ENCODE measurements at regions of chr2 and their contacts with region 1.

Region 1: GRCh38 chr2:231706731-231707624 is 1.3 kb upstream of the PTMA start:
- DNase-seq: peak; percentile 95
- ATAC-seq: peak; percentile 35
- H3K4me3 ChIP-seq: peak overlapping the region; percentile 58 to 83 (median 75)
- H3K27ac ChIP-seq: peak overlapping the region; percentile 87
- H3K4me1 ChIP-seq: peaks cover 55% of the 10 kb centered on the region
- H3K27me3 ChIP-seq: no peaks in the 10 kb centered on the region
- CTCF ChIP-seq: peak; percentile 98
- EP300 ChIP-seq: peak in 1 of 2 experiments; percentile 16; a peak in 1 of 4 replicates
- POLR2A ChIP-seq: peak in 1 of 2 experiments; percentile 79; a peak in 2 of 4 replicates
- RAD21 ChIP-seq: no peak

Region 2: DNA sequence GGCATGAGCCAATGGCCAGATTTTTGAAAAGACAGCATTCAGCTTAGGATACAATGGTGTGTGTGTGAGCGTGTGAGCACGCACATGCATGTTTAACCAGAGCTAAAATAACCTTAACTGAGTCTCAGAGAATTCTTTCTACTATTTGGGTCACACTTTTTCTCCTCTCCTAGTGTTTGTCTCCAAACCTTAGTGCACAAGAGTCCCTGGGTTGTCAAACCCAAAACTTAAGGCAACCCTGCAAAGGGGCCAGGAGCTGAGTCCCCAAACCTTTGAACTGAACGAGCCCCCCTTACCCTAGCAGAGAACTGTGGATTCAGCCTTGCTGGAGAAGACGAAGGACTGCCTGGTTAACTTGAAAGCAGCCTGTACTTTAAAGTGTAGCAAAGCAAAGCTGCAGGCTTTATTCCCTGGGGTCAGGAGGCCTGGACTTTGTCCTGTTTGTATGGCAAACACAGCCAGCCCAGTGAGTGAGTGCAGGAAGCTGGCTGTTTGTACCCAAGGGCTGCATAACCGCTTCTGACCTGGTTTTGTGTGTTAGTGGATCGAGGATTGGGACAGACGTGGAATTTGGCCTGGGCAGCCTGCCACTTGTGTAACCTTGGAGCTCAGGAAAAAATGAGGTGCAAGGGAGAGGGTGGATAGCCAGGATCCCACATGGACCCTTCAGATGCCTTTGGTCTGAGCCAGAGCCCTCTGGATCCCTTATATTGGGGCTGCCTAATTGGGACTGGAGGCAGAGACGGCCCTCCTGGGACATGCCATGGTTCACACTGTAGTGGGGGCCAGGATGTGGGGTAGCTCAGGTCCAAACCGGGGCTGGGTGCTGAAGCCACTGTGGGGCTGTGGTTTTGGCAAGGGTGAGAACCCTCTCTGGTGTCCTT is 656.7 kb before region 1 on chr2:
- CTCF ChIA-PET with region 1: no interaction called
- POLR2A ChIA-PET with region 1: interaction called, 7 read pairs
- in situ Hi-C with region 1: no loop called
- intact Hi-C with region 1: loop called (anchors 10 kb)
- DNase-seq: peak; percentile 100
- ATAC-seq: peak; percentile 76
- H3K4me3 ChIP-seq: peak overlapping the region; percentile 40 to 82 (median 57)
- H3K27ac ChIP-seq: peak overlapping the region; percentile 97
- H3K4me1 ChIP-seq: peaks cover 82% of the 10 kb centered on the region
- H3K27me3 ChIP-seq: no peaks in the 10 kb centered on the region; a peak in 1 of 5 replicates
- CTCF ChIP-seq: peak; percentile 53
- EP300 ChIP-seq: peak; percentile 89 to 99
- POLR2A ChIP-seq: peak in 1 of 2 experiments; percentile 99; a peak in 2 of 4 replicates
- RAD21 ChIP-seq: peak; percentile 31; the same call in 1 of the 2 replicates

Region 3: DNA sequence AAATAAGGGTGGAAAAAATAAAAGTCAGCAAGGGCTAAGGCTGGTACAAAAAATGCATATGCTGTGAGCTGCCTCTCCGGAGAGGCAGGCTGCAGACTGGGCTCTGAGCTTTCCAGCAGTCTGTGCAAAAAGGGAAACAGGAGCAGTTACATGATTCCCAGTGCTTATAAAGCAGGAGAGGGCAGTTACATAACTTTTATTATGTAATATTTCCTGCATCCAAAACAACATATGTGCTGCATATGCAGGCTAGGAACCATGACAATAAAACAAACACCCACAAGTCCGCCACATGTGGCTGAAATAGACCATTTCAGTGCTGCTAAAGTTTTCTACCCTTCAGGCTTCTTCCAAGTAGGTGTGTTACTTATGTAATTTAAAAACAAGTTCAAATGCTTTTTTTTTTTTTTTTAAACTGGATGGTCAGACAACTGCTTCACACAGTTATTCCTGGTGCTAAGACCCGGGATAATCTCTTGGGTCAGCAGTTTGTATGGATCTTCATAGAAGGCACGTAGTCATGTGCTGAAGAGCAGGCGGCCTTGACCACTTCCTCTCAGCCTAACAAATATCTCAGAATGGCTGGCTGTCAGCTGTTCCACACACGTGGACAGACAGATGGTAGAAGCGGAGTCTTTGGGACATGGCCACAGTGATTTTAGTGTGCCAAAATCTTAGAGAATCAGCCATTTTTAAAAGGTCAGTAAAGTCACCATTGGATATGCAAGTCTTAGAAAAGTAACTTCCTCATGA is 465.0 kb before region 1 on chr2:
- CTCF ChIA-PET with region 1: no interaction called
- POLR2A ChIA-PET with region 1: no interaction called
- in situ Hi-C with region 1: no loop called
- intact Hi-C with region 1: no loop called
- DNase-seq: no peak
- ATAC-seq: no peak
- H3K4me3 ChIP-seq: no peak overlapping the region
- H3K27ac ChIP-seq: no peak overlapping the region
- H3K4me1 ChIP-seq: peaks cover 20% of the 10 kb centered on the region
- H3K27me3 ChIP-seq: no peaks in the 10 kb centered on the region
- CTCF ChIP-seq: no peak
- EP300 ChIP-seq: no peak
- POLR2A ChIP-seq: no peak
- RAD21 ChIP-seq: no peak

Region 4: DNA sequence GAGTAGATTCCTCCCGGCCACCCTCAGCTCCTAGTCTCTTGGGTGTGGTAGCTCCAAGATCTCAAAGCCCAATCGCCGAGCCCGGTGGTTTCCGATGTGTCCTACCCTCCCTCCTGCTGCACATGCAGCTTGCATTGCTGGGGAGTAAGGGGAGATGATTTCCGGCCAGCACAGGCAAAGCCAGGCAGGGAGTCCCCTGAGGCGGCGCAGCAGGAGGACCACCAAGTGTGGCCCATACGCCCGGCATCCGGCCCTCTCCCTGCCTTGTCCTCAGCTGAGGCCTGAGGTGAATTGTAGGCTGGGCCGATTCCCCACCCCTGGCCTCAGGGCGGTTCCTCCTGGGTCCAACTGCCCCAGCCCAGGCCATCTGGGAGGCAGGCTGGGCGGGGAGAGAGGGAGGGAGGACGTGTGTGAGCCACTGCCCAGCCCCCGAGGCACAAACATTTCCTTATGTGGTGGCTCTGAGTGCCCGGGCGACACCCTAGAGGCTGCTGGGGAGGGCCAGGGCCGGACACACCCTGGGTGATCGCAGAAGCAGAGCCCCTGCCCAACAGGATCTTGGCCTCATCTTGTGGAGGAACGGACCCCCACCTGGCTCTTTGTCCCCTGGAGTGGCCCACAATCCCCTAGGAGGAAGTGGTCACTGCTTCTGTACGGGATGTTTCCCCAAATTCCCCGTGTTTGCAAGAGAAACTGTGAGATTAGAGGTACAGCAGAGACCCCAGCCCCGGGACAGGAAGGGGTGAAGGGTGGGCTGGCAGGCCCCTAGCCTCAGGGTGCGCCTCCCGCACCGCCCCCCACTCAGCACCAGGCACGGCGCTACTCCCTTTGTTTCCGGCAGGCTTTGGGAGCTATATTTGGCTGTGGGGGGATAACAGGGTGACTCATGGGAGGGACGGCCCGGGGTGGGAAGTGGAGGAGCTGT is 40.5 kb before region 1 on chr2:
- CTCF ChIA-PET with region 1: no interaction called
- POLR2A ChIA-PET with region 1: interaction called, 13 read pairs
- in situ Hi-C with region 1: no loop called
- intact Hi-C with region 1: no loop called
- DNase-seq: peak; percentile 83
- ATAC-seq: peak; percentile 84
- H3K4me3 ChIP-seq: peak overlapping the region; percentile 62 to 77 (median 65)
- H3K27ac ChIP-seq: no peak overlapping the region
- H3K4me1 ChIP-seq: peaks cover 42% of the 10 kb centered on the region
- H3K27me3 ChIP-seq: peaks cover 0 to 43% of the 10 kb centered on the region in 2 experiments; a peak in 3 of 5 replicates
- CTCF ChIP-seq: no peak
- EP300 ChIP-seq: no peak
- POLR2A ChIP-seq: no peak; a peak in 1 of 4 replicates
- RAD21 ChIP-seq: no peak

Region 5: DNA sequence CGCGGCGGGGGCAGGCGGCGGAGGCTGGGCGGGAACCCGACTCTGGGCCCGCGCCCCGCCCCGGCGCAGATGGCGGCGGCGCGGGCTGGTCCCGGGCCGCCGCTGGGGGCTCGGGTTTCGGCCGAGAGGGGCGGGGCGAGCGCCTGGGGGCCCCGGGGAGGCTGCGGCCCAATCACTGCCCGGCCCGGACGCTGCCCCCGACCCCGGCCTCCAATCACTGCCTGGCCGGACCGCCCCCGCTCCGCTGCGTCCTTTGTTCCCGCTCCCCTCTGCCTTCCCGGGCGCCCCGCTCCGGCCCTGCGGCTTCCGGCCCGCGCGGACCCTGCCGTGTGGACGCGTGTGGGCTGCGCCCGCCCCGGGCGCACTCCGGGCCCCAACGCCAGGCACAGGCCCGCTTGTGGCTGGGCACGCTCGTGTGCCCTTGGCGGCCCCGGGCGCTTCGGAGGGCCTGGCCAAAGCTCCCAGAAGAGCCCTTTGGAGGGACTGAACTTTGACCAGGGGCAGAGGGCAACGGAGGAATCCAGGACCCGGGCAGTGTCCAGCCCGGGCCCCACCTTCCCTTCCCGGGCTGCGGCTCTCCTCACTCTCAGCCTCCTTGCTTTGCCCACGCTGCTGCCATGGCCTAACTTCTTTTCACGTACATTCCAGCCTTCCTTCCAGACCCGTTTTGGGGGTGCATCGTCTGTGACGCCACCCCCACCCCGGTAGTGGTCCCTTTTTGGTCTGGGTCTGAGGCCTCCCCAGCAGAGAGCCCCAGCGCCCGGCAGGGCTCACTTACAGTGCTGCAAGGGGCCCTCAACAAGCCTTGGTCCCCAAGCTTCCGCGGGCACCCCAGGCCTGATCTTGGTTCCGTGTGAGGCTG is 25.8 kb before region 1 on chr2:
- CTCF ChIA-PET with region 1: interaction called, 8 read pairs
- POLR2A ChIA-PET with region 1: interaction called, 56 read pairs
- in situ Hi-C with region 1: loop called (anchors 5 kb)
- intact Hi-C with region 1: no loop called
- DNase-seq: peak; percentile 87
- ATAC-seq: peak; percentile 83
- H3K4me3 ChIP-seq: peak overlapping the region; percentile 63 to 82 (median 66)
- H3K27ac ChIP-seq: peak overlapping the region; percentile 98
- H3K4me1 ChIP-seq: peaks cover 64% of the 10 kb centered on the region
- H3K27me3 ChIP-seq: peaks cover 0 to 10% of the 10 kb centered on the region in 2 experiments; a peak in 1 of 5 replicates
- CTCF ChIP-seq: peak; percentile 11; the same call in 1 of the 2 replicates
- EP300 ChIP-seq: no peak; a peak in 1 of 4 replicates
- POLR2A ChIP-seq: peak in 1 of 2 experiments; percentile 93; a peak in 2 of 4 replicates
- RAD21 ChIP-seq: peak; percentile 77

Region 6: DNA sequence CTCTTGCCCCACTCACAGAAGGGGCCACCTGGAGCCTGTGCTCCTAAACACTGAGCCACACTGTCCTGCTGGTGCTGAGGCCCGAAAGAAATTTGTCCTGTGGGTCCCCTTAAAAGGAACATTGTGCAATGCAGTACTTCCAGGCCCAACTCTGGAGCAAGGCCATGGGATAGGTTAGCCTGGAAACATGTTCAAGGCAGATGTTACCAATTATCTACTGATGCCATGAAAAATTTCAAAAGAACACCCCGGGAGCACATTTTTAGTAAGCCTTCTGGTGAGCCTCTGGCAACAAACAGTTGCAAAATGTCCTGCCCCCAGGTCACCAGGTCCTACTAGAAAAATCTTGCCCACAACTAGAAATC is 11.0 kb before region 1 on chr2:
- CTCF ChIA-PET with region 1: no interaction called
- POLR2A ChIA-PET with region 1: interaction called, 44 read pairs
- in situ Hi-C with region 1: no loop called
- intact Hi-C with region 1: no loop called
- DNase-seq: no peak
- ATAC-seq: peak; percentile 32
- H3K4me3 ChIP-seq: no peak overlapping the region; a peak in 1 of 6 replicates
- H3K27ac ChIP-seq: no peak overlapping the region
- H3K4me1 ChIP-seq: peaks cover 38% of the 10 kb centered on the region
- H3K27me3 ChIP-seq: peaks cover 0 to 10% of the 10 kb centered on the region in 2 experiments; a peak in 1 of 5 replicates
- CTCF ChIP-seq: no peak
- EP300 ChIP-seq: no peak; a peak in 1 of 4 replicates
- POLR2A ChIP-seq: no peak
- RAD21 ChIP-seq: no peak

Region 7: DNA sequence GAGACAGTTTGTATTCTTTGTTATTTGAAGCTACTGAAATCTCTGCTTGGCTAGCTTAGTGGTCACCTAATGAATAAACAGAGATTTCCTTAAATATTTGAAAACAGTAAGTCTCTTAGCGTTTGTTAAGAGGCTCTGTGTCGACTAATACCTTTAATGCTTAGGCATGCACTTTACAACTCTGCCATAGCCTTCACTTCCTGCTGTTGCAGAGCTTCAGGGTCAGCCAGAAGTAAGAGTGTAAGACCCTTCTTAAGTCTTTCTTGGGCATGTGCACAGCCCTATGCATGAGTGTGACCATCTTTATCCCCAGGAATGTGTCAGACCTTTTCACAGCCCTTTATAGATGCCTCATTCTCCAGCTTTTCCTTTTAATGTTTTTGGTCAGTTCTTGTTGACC is 476.3 kb after region 1 on chr2:
- CTCF ChIA-PET with region 1: no interaction called
- POLR2A ChIA-PET with region 1: no interaction called
- in situ Hi-C with region 1: no loop called
- intact Hi-C with region 1: no loop called
- DNase-seq: no peak
- ATAC-seq: no peak
- H3K4me3 ChIP-seq: no peak overlapping the region
- H3K27ac ChIP-seq: no peak overlapping the region
- H3K4me1 ChIP-seq: 0 out of 2 replicates have a peak, but pooled peaks cover 8% of the 10 kb centered on the region
- H3K27me3 ChIP-seq: no peaks in the 10 kb centered on the region
- CTCF ChIP-seq: no peak
- EP300 ChIP-seq: no peak
- POLR2A ChIP-seq: no peak
- RAD21 ChIP-seq: no peak